GM10248 (cell line): ENCODE measurements at regions of chr11 and their contacts with region 1.

Region 1: DNA sequence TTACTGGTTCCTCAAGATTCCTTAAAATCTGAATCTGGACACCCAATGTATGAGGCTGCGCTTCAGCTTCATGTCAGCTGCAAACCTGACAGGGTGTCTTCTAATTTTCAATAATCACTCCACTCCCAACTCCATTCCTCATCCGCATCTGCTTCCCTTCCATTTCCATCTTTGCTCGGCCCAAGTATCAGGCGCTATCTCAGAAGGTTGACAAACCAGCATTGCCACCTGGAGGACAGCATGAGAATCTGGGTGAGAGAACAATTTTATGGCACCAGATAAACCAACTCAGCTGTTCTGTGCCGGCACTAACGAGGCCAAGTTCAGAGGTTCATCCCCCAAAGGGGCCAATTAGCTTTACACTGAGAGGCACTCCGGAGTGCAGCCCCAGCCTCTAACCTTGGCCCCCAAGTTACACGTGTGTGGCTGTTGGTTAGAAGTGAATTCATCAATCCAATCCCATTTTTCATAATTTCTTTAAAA is 79.1 kb upstream of the LMO2 start:
- DNase-seq: peak; percentile 76
- CTCF ChIP-seq: peak; percentile 76

Region 2: GRCh38 chr11:33848717-33849390 is 122.2 kb before region 1 on chr11:
- CTCF ChIA-PET with region 1: interaction called, 29 read pairs
- POLR2A ChIA-PET with region 1: no interaction called
- DNase-seq: no peak
- CTCF ChIP-seq: no peak

Region 3: GRCh38 chr11:33869481-33870422 is 101.3 kb before region 1 on chr11:
- CTCF ChIA-PET with region 1: interaction called, 199 read pairs
- POLR2A ChIA-PET with region 1: no interaction called
- DNase-seq: peak; percentile 56
- CTCF ChIP-seq: no peak

Region 4: GRCh38 chr11:33881651-33882503 is 89.1 kb before region 1 on chr11:
- CTCF ChIA-PET with region 1: interaction called, 11 read pairs
- POLR2A ChIA-PET with region 1: no interaction called
- DNase-seq: no peak
- CTCF ChIP-seq: no peak

Region 5: GRCh38 chr11:33959855-33960400 is 11.1 kb before region 1 on chr11:
- CTCF ChIA-PET with region 1: interaction called, 39 read pairs
- POLR2A ChIA-PET with region 1: no interaction called
- DNase-seq: no peak
- CTCF ChIP-seq: no peak

Region 6: DNA sequence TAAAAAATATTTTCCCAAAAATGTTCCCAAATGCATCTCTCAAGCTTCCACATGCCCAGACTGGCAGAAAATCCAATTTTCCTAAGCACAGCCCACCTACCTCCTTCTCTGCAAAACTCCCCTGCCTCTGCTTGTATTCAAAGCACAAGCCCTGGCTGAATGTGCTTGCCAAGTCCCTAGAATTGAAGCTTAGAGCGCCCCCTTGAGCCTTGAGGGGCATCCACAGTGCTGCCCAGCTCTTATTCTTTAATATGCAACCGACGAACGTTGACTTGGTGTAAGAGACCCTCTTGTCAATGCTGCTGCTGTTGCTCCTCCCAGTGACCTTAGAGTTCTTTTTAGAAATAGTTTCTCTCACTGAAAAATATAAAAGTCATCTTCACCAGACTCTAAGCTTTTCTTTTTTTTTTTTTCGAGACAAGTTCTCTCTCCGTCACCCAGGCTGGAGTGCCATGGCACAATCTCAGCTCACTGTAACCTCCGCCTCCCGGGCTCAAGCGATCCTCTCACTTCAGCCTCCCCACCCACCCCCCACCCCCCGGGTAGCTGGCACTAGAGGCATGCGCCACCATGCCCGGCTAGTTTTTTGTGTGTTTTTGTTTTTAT is 17.1 kb after region 1 on chr11:
- CTCF ChIA-PET with region 1: interaction called, 36 read pairs
- POLR2A ChIA-PET with region 1: no interaction called
- DNase-seq: peak; percentile 73
- CTCF ChIP-seq: peak; percentile 83